ENCODE measurements at regions of chr6 and their contacts with region 1.

Region 1: GRCh38 chr6:3125815-3126214 is 7.3 kb downstream of the BPHL start:
- DNase-seq: no peak
- H3K4me3 Mint-ChIP-seq: no peak overlapping the region
- H3K27ac Mint-ChIP-seq: no peak overlapping the region
- H3K4me1 Mint-ChIP-seq: no peaks in the 10 kb centered on the region
- H3K27me3 Mint-ChIP-seq: no peaks in the 10 kb centered on the region

Region 2: DNA sequence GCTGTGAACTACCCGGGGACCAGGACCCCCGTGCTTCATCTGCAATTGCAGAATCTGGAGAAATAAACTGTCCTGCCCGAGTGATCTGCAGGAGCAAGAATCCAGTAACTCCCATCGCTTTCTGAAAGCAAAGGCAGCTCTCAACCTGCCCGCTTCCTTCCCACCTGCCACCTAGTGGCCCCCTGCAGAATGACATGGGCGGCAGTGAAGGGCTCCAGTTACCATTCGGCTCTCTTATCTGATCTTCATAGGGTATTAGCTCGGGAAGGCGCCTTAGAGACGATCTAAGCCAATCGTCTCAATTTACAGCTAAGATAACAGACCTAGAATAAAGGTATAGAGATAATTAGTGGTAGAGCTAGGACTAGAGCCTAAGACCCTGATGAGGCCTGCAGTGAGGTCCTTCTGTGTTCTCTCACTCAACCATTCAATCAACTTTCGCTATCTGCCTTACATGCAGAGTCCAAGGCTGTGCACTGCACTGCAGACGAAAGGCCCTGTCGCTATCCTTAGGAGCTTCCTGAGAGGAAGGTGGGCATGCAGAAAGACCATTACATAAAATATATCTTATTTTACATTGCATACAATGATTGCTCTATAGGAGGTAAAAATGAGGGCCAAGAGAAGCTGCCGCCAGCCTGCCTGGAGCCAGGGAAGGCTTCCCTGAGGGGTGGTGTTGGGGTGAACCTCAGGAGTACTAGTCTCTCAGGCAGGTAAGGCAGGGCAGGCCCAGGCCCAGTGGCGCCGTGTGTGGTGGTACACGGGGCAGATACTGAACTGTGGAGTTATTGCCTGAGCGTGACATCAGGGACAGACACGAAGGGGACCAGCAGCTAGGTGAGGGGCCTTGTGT is 125.9 kb after region 1 on chr6:
- intact Hi-C with region 1: loop called (anchors 1 kb)
- DNase-seq: peak; percentile 75
- H3K4me3 Mint-ChIP-seq: no peak overlapping the region
- H3K27ac Mint-ChIP-seq: no peak overlapping the region
- H3K4me1 Mint-ChIP-seq: peaks cover 14% of the 10 kb centered on the region
- H3K27me3 Mint-ChIP-seq: peaks cover 30% of the 10 kb centered on the region

Region 3: DNA sequence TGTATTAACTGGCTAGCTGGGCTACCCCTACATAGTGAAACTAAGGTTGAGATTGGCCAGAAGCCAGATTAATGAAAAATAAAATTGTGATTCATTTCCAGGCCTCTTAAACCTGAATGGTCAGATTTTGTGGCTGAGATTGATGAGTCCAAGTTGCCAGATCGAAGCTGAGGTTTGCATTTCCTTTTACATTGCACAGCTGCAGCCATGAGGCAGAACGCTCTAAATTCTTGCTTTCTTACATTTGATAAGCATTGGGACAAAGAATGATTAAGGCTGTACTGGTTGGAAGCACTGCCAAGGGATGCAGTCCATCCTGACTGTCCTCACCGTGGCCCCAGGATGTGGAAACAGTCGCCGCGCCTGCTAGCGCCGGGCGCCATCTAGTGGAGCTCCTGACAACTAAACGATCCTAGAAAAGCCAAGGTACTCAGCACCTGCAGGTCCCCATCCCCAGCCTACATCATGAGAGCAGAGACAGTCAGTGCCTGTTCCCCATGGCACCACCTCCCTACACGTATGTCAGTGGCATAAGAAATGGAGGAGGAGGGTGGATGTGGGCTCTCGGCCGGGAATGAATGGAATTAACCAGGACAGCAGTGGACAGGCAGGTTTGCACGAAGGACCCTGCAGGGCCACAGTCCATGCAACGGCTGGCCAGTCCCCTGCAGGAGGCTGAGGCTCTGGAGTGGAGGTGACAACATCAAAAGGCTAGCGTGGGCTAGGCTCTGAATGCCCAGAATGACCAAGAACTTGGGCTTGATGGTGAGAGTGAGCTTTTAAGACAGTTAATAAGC is 606.7 kb after region 1 on chr6:
- intact Hi-C with region 1: loop called (anchors 5 kb)
- DNase-seq: peak; percentile 38
- H3K4me3 Mint-ChIP-seq: no peak overlapping the region
- H3K27ac Mint-ChIP-seq: no peak overlapping the region
- H3K4me1 Mint-ChIP-seq: peaks cover 5% of the 10 kb centered on the region
- H3K27me3 Mint-ChIP-seq: peaks cover 14% of the 10 kb centered on the region